ENCODE measurements at regions of chr5 and their contacts with region 1.

Region 1: GRCh38 chr5:179033004-179033580 is 9.5 kb downstream of the ZNF879 start:
- DNase-seq: no peak
- H3K4me3 ChIP-seq: no peak overlapping the region
- H3K27ac ChIP-seq: no peak overlapping the region
- H3K4me1 ChIP-seq: no peaks in the 10 kb centered on the region
- H3K27me3 ChIP-seq: no peaks in the 10 kb centered on the region
- CTCF ChIP-seq: no peak

Region 2: DNA sequence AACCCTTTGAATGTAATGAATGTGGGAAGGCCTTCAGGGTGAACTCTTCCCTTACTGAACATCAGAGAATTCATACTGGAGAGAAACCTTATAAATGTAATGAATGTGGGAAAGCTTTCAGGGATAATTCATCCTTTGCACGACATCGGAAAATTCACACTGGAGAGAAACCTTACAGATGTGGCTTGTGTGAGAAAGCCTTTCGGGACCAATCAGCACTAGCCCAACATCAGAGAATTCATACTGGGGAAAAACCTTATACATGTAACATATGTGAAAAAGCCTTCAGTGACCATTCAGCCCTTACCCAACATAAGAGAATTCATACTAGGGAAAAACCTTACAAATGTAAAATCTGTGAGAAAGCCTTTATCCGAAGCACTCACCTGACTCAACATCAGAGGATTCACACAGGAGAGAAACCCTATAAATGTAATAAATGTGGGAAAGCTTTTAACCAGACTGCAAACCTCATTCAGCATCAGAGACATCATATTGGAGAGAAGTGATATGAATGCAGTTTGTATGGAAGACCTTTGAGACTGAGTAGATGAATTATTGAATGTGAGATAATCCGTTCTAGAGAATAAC is 67.5 kb before region 1 on chr5:
- CTCF ChIA-PET with region 1: no interaction called
- dilution Hi-C with region 1: loop called (anchors 5 kb)
- in situ Hi-C with region 1: no loop called
- intact Hi-C with region 1: no loop called
- DNase-seq: no peak
- H3K4me3 ChIP-seq: no peak overlapping the region
- H3K27ac ChIP-seq: no peak overlapping the region
- H3K4me1 ChIP-seq: no peaks in the 10 kb centered on the region
- H3K27me3 ChIP-seq: no peaks in the 10 kb centered on the region
- CTCF ChIP-seq: no peak

Region 3: GRCh38 chr5:179716286-179716685 is 683.2 kb after region 1 on chr5:
- CTCF ChIA-PET with region 1: no interaction called
- dilution Hi-C with region 1: no loop called
- in situ Hi-C with region 1: no loop called
- intact Hi-C with region 1: no loop called
- DNase-seq: no peak
- H3K4me3 ChIP-seq: no peak overlapping the region
- H3K27ac ChIP-seq: no peak overlapping the region
- H3K4me1 ChIP-seq: no peaks in the 10 kb centered on the region
- H3K27me3 ChIP-seq: no peaks in the 10 kb centered on the region
- CTCF ChIP-seq: no peak

Measured in mammary epithelial cell (primary cell).